CD8-positive, alpha-beta T cell (primary cell): ENCODE measurements at regions of chr6 and their contacts with region 1.

Region 1: DNA sequence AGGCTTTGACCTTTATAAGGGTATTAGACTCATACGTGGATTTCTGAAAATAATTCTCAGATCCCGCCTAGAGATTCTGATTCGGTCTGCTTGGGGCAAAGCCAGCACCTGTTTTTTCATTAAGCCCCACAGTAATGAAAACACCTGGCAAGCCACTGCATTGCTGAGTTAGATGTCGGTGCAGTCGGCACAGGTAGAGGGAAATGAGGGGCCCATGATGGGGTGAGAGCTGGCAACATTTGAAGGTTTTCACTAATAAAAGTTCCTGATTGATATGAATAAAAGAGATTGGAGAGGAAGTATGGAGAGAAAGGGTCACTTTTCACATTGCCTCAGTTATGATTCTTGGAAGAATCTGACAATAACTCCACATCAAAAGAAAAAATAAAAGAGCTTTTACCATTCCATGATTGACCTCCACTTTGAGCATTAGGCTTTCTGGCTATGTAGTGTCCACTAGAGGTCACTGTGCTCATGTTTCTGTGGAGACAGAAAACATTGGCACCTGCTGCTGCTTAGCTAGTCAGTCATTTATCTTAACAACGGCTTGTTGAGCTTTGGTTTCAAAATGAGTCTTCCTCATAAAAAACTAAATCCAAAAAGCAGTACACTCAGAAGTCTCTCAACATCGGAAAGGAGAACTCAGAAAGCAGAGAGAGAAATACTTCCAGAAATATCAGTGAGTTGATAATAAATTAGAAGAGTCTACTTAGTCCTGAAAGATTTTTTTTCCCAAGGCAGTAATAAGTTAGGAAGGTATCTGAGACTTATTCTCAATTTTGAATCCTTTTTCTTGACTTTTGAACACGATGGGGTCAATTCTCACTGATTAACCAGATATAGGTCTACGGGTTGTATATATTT is 53.3 kb upstream of the KLHL31 start:
- DNase-seq: peak in 5 of 9 experiments; percentile 18 to 70 (median 20)
- ATAC-seq: peak; percentile 56
- H3K4me3 ChIP-seq: no peak overlapping the region
- H3K4me3 Mint-ChIP-seq: no peak overlapping the region
- H3K27ac ChIP-seq: no peak overlapping the region
- H3K27ac Mint-ChIP-seq: no peak overlapping the region
- H3K4me1 ChIP-seq: no peaks in the 10 kb centered on the region
- H3K4me1 Mint-ChIP-seq: peaks cover 2% of the 10 kb centered on the region
- H3K27me3 ChIP-seq: no peaks in the 10 kb centered on the region
- H3K27me3 Mint-ChIP-seq: peaks cover 9% of the 10 kb centered on the region
- CTCF ChIP-seq: peak; percentile 73

Region 2: GRCh38 chr6:53103992-53104675 is 614.7 kb before region 1 on chr6:
- CTCF ChIA-PET with region 1: no interaction called
- POLR2A ChIA-PET with region 1: no interaction called
- intact Hi-C with region 1: no loop called
- DNase-seq: peak in 2 of 9 experiments; percentile 4 to 13
- ATAC-seq: no peak
- H3K4me3 ChIP-seq: no peak overlapping the region
- H3K4me3 Mint-ChIP-seq: no peak overlapping the region
- H3K27ac ChIP-seq: no peak overlapping the region
- H3K27ac Mint-ChIP-seq: no peak overlapping the region
- H3K4me1 ChIP-seq: no peaks in the 10 kb centered on the region
- H3K4me1 Mint-ChIP-seq: no peaks in the 10 kb centered on the region
- H3K27me3 ChIP-seq: no peaks in the 10 kb centered on the region
- H3K27me3 Mint-ChIP-seq: no peaks in the 10 kb centered on the region
- CTCF ChIP-seq: no peak

Region 3: GRCh38 chr6:53707108-53707897 is 11.5 kb before region 1 on chr6:
- CTCF ChIA-PET with region 1: interaction called, 109 read pairs
- POLR2A ChIA-PET with region 1: no interaction called
- intact Hi-C with region 1: no loop called
- DNase-seq: no peak
- ATAC-seq: no peak
- H3K4me3 ChIP-seq: no peak overlapping the region
- H3K4me3 Mint-ChIP-seq: no peak overlapping the region
- H3K27ac ChIP-seq: no peak overlapping the region
- H3K27ac Mint-ChIP-seq: no peak overlapping the region
- H3K4me1 ChIP-seq: no peaks in the 10 kb centered on the region
- H3K4me1 Mint-ChIP-seq: no peaks in the 10 kb centered on the region
- H3K27me3 ChIP-seq: peaks cover 0 to 4% of the 10 kb centered on the region in 2 experiments
- H3K27me3 Mint-ChIP-seq: peaks cover 13% of the 10 kb centered on the region
- CTCF ChIP-seq: no peak

Region 4: GRCh38 chr6:53734473-53735299 is 15.9 kb after region 1 on chr6:
- CTCF ChIA-PET with region 1: interaction called, 109 read pairs
- POLR2A ChIA-PET with region 1: no interaction called
- intact Hi-C with region 1: no loop called
- DNase-seq: peak in 5 of 9 experiments; percentile 9 to 54 (median 24)
- ATAC-seq: peak; percentile 38
- H3K4me3 ChIP-seq: no peak overlapping the region
- H3K4me3 Mint-ChIP-seq: no peak overlapping the region
- H3K27ac ChIP-seq: no peak overlapping the region
- H3K27ac Mint-ChIP-seq: no peak overlapping the region
- H3K4me1 ChIP-seq: peaks cover 15% of the 10 kb centered on the region
- H3K4me1 Mint-ChIP-seq: peaks cover 17% of the 10 kb centered on the region
- H3K27me3 ChIP-seq: no peaks in the 10 kb centered on the region
- H3K27me3 Mint-ChIP-seq: peaks cover 10% of the 10 kb centered on the region
- CTCF ChIP-seq: no peak

Region 5: GRCh38 chr6:53786832-53787231 is 68.0 kb after region 1 on chr6:
- CTCF ChIA-PET with region 1: no interaction called
- POLR2A ChIA-PET with region 1: no interaction called
- intact Hi-C with region 1: no loop called
- DNase-seq: no peak
- ATAC-seq: no peak
- H3K4me3 ChIP-seq: no peak overlapping the region
- H3K4me3 Mint-ChIP-seq: no peak overlapping the region
- H3K27ac ChIP-seq: no peak overlapping the region
- H3K27ac Mint-ChIP-seq: no peak overlapping the region
- H3K4me1 ChIP-seq: no peaks in the 10 kb centered on the region
- H3K4me1 Mint-ChIP-seq: no peaks in the 10 kb centered on the region
- H3K27me3 ChIP-seq: no peaks in the 10 kb centered on the region
- H3K27me3 Mint-ChIP-seq: peaks cover 22% of the 10 kb centered on the region
- CTCF ChIP-seq: no peak